GM12878 (cell line): ENCODE measurements at regions of chr7 and their contacts with region 1.

Region 1: DNA sequence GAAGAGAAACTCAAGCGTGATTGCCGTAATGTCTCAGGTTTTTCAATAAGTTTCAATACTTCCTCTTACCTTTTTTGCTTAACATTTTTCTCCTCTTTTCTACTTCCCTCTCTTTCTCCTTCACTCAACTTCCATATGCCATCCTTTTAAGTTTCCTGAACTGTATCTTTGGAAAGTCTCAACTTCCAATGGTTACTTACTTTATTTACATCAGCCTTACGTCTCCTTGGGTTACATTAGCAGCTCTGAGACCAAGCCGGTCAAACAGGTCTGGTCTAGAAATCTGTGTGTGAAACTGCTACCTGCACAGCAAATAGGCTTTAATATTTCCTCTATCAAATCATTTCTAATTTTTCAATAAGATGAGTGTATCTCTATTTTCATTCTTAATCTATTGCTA is 3.3 kb upstream of the SEMA3C start:
- DNase-seq: no peak
- ATAC-seq: no peak
- H3K4me3 ChIP-seq: no peak overlapping the region
- H3K27ac ChIP-seq: no peak overlapping the region
- H3K4me1 ChIP-seq: no peaks in the 10 kb centered on the region
- H3K27me3 ChIP-seq: peaks cover 0 to 6% of the 10 kb centered on the region in 2 experiments; a peak in 3 of 4 replicates
- CTCF ChIP-seq: no peak
- EP300 ChIP-seq: no peak
- POLR2A ChIP-seq: no peak
- RAD21 ChIP-seq: no peak

Region 2: DNA sequence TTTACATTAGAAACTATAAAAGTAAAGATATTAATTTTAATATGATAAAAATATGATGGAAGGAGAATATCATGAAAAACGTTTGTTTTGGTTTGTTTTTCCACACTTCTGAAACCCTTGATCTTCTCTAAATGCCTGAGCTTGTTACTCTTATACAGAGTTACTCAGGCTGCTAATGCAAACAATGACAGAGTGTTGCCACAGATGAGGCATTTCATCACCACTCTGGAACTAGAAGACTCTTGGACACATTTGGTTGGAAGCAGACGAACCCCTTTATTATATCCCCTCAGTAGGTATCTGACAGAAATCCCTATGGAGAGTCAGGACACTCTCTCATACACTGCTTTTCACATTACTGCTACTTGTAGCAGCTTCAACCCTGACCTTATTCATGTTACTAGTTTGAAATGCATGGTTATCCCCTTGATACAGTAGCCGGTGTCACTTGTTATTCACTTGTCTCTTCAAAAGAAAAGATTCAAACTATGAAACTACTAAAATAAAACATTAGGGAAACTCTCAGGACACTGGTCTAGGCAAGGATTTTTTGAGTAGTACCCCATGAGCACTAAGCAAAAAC is 70.2 kb before region 1 on chr7:
- CTCF ChIA-PET with region 1: no interaction called
- POLR2A ChIA-PET with region 1: no interaction called
- RAD21 ChIA-PET with region 1: no interaction called
- SMC1A ChIA-PET with region 1: no interaction called
- in situ Hi-C with region 1: no loop called
- intact Hi-C with region 1: no loop called
- DNase-seq: no peak
- ATAC-seq: no peak
- H3K4me3 ChIP-seq: no peak overlapping the region
- H3K27ac ChIP-seq: no peak overlapping the region
- H3K4me1 ChIP-seq: no peaks in the 10 kb centered on the region
- H3K27me3 ChIP-seq: no peaks in the 10 kb centered on the region
- CTCF ChIP-seq: no peak
- EP300 ChIP-seq: no peak
- POLR2A ChIP-seq: no peak
- RAD21 ChIP-seq: no peak

Region 3: DNA sequence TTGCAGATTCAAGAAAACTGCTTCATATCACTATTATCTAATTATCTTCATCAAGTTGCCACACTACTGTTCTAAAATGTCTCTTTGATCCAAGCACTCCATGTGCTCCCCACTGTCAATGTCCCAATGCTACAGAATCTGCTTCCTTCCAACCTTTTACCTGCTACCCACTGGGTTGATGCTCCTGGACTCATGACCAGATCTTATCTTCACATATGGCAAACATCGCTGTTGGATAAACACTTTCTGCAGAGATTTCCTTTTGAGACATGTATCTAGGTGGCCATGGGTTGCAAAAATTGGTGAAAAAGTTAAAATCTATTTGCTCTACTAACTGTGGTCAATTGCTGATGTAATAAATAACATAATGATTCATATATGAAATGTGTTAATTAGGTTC is 21.1 kb after region 1 on chr7:
- CTCF ChIA-PET with region 1: no interaction called
- POLR2A ChIA-PET with region 1: no interaction called
- RAD21 ChIA-PET with region 1: no interaction called
- SMC1A ChIA-PET with region 1: no interaction called
- in situ Hi-C with region 1: no loop called
- intact Hi-C with region 1: loop called (anchors 2 kb)
- DNase-seq: no peak
- ATAC-seq: no peak
- H3K4me3 ChIP-seq: no peak overlapping the region
- H3K27ac ChIP-seq: no peak overlapping the region
- H3K4me1 ChIP-seq: no peaks in the 10 kb centered on the region
- H3K27me3 ChIP-seq: no peaks in the 10 kb centered on the region
- CTCF ChIP-seq: no peak
- EP300 ChIP-seq: no peak
- POLR2A ChIP-seq: no peak
- RAD21 ChIP-seq: no peak